ENCODE measurements at regions of chr11 and their contacts with region 1.

Region 1: DNA sequence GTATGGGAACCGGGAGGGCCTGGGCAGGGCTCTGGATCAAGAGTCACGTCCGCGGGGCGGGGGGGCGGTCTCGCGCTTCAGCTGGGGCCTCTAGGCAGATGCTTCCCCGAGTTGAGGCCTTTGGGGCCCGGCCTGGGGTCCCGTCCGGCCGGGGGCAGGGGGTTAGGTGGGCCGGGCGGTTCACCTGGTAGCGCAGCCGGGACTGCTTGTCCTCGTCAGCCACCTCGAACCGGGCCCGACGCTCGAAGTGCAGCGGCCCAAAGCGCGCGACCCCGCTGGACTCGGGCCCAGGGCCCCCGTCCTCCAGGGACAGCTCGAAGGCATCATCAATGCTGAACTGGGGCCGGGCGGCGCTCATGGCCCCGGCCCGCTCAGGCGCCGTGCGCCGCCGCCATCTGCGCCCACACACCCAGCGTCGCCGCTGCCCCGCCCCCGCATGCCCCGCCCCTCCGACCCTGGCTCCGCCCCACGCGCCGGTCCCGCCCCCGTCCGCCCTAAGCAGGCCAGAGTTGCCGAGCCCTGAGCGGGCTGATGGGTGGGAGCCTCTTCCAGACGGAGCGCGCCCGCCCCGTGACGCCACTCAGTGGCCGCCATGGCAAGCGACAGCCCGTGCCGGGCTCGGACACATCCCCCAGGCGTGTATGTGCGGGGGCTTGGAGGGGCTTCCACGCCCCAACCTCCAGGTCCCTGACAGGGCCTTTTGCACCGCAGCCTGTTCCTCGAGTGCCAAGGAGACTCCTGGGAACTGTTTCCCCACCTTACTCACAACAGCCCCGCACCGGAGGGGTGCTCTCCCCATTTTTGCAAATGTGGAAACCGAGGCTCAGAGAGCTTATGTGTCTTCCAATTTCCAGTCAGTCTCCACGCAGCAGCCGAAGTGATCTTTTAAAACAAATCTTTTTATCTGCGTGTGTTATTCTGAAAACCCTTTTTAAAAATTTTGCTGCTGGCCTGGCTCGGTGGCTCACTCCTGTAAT is at the start of gene TMEM134:
- DNase-seq: peak; percentile 86 to 96 (median 92)
- ATAC-seq: peak; percentile 71
- H3K4me3 ChIP-seq: peak within 1 kb of the TSS; percentile 83
- H3K4me3 Mint-ChIP-seq: peak within 1 kb of the TSS; percentile 91
- H3K27ac ChIP-seq: peak within 1 kb of the TSS; percentile 66 to 81
- H3K27ac Mint-ChIP-seq: peak within 1 kb of the TSS; percentile 88
- H3K4me1 ChIP-seq: peaks cover 56% of the 10 kb centered on the region
- H3K4me1 Mint-ChIP-seq: peaks cover 42% of the 10 kb centered on the region
- H3K27me3 ChIP-seq: no peaks in the 10 kb centered on the region
- H3K27me3 Mint-ChIP-seq: no peaks in the 10 kb centered on the region
- CTCF ChIP-seq: no peak
- total RNA-seq, gene TMEM134: 49.9 to 52.4 TPM

Region 2: DNA sequence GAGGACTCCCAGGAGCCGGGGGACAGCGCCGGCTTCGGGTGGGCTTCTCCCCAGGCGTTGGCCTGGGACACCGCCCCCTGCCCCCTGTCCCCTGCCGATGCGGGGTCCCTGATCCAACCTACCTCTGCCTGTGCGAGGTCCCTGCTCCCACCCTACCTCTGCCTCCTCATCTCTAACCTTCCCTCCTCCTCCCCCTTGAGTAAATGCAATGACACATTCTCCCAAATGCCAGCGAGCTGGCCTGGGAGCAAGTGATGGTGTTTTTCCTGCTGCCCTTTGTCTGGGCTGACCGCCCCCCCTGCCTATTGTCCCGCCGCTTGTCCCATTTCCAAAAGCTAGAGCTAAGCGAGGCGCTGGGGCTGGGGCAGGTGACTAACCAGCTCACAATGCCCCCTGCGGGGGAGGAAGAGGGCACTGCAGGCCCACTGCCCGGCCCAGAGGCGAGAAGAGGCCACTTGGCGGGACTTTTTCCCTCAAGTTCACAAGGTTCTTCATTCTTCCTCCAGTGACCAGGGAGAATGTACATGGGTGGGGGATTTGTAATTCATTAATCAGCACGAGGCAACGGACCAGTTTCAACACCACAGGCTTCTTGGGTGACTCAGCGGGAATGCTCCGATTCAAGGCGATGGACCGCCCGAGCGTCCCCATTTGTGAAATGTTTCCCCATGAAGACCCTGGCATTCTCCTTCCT is 95.1 kb before region 1 on chr11:
- CTCF ChIA-PET with region 1: no interaction called
- POLR2A ChIA-PET with region 1: no interaction called
- intact Hi-C with region 1: no loop called
- DNase-seq: peak in 10 of 14 experiments; percentile 26 to 83 (median 55)
- ATAC-seq: peak; percentile 46
- H3K4me3 ChIP-seq: peak overlapping the region; percentile 48
- H3K4me3 Mint-ChIP-seq: peak overlapping the region; percentile 91
- H3K27ac ChIP-seq: no peak overlapping the region
- H3K27ac Mint-ChIP-seq: peak overlapping the region; percentile 91
- H3K4me1 ChIP-seq: peaks cover 61% of the 10 kb centered on the region
- H3K4me1 Mint-ChIP-seq: peaks cover 51% of the 10 kb centered on the region
- H3K27me3 ChIP-seq: peaks cover 6 to 16% of the 10 kb centered on the region in 2 experiments
- H3K27me3 Mint-ChIP-seq: peaks cover 42% of the 10 kb centered on the region
- CTCF ChIP-seq: peak; percentile 40

Region 3: GRCh38 chr11:67401495-67402191 is 67.5 kb before region 1 on chr11 and contains the start of gene PPP1CA:
- CTCF ChIA-PET with region 1: interaction called, 28 read pairs
- POLR2A ChIA-PET with region 1: interaction called, 30 read pairs
- intact Hi-C with region 1: loop called (anchors 1 to 2 kb)
- DNase-seq: peak; percentile 83 to 96 (median 92)
- ATAC-seq: peak; percentile 69
- H3K4me3 ChIP-seq: peak within 1 kb of the TSS; percentile 98
- H3K4me3 Mint-ChIP-seq: peak within 1 kb of the TSS; percentile 100
- H3K27ac ChIP-seq: peak within 1 kb of the TSS; percentile 62 to 84
- H3K27ac Mint-ChIP-seq: peak within 1 kb of the TSS; percentile 98
- H3K4me1 ChIP-seq: peaks cover 86% of the 10 kb centered on the region
- H3K4me1 Mint-ChIP-seq: peaks cover 56% of the 10 kb centered on the region
- H3K27me3 ChIP-seq: peaks cover 0 to 3% of the 10 kb centered on the region in 2 experiments
- H3K27me3 Mint-ChIP-seq: no peaks in the 10 kb centered on the region
- CTCF ChIP-seq: no peak
- total RNA-seq, gene PPP1CA: 42.0 to 45.5 TPM

Region 4: GRCh38 chr11:67420646-67421420 is 48.3 kb before region 1 on chr11:
- CTCF ChIA-PET with region 1: interaction called, 5 read pairs
- POLR2A ChIA-PET with region 1: interaction called, 31 read pairs
- intact Hi-C with region 1: loop called in 1 of 2 experiments (anchors 5 kb)
- DNase-seq: peak; percentile 97 to 100 (median 99)
- ATAC-seq: peak; percentile 79
- H3K4me3 ChIP-seq: peak overlapping the region; percentile 50
- H3K4me3 Mint-ChIP-seq: peak overlapping the region; percentile 86
- H3K27ac ChIP-seq: peak overlapping the region; percentile 15 to 79
- H3K27ac Mint-ChIP-seq: peak overlapping the region; percentile 94
- H3K4me1 ChIP-seq: peaks cover 57% of the 10 kb centered on the region
- H3K4me1 Mint-ChIP-seq: peaks cover 56% of the 10 kb centered on the region
- H3K27me3 ChIP-seq: no peaks in the 10 kb centered on the region
- H3K27me3 Mint-ChIP-seq: no peaks in the 10 kb centered on the region
- CTCF ChIP-seq: no peak

Region 5: DNA sequence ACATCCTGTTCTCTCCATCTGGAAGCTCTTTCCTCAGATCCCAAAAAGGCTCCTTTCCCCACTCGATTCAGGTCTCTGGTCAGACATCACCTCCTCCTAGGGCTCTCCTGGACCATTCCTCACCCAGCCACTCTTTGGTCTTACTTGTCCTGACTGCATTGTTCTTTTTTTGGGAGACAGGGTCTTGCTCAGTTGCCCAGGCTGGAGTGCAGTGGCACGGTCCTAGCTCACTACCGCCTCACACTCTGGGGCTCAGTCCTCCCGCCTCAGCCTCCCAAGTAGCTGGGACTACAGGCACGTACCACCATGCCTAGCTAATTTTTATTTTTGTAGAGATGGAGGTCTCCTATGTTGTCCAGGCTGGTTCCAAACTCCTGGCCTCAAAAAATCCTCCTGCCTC is 23.6 kb before region 1 on chr11:
- CTCF ChIA-PET with region 1: interaction called, 3 read pairs
- POLR2A ChIA-PET with region 1: interaction called, 10 read pairs
- intact Hi-C with region 1: loop called (anchors 1 to 2 kb)
- DNase-seq: no peak
- ATAC-seq: no peak
- H3K4me3 ChIP-seq: no peak overlapping the region
- H3K4me3 Mint-ChIP-seq: peak overlapping the region; percentile 84
- H3K27ac ChIP-seq: peak overlapping the region; percentile 83 to 90
- H3K27ac Mint-ChIP-seq: peak overlapping the region; percentile 100
- H3K4me1 ChIP-seq: peaks cover 94% of the 10 kb centered on the region
- H3K4me1 Mint-ChIP-seq: peaks cover 81% of the 10 kb centered on the region
- H3K27me3 ChIP-seq: no peaks in the 10 kb centered on the region
- H3K27me3 Mint-ChIP-seq: no peaks in the 10 kb centered on the region
- CTCF ChIP-seq: no peak

Region 6: DNA sequence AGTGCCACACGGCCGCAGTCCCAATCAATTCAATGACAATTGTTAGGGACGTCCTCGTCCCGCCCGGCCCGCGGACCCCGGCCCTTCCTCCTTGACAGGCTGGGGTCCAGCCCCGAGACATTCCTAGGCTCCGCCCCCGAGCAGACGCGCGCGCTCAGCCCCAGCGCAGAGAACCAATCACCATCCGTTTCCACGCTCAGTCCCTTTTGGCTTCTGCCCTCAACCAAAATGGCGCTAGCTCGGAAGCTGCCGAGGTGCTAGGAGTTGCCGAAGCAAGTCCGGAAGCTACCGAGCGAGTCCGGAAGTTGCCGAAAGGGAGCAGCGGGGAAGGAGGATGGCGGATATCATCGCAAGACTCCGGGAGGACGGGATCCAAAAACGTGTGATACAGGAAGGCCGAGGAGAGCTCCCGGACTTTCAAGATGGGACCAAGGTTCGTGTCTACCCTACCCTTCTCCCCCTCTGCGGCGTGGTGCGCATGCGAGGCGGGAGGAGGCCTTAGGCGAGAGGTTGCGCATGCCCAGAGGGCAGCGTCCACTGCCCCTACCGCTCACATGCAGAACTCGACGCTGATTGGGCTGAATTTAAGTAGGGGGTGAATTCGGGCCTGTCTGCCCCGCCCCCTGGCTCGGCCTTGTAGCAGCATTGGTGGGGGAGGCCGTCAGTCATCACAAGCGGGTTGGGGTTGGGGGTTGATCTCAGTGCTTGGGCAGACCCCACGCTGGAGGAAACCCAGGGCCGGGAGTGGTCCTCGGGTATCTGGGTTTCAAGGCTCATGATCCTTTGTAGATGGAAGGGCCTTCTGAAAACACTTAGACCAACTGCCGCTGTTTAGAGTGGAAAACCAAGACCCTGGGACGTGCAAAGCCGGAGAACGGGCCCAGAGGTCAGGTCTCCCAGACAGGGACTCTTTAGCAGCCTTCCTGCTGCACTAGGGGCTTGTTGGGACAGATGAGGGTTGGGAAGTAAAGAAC is 14.0 kb after region 1 on chr11 and contains the start of gene AIP:
- CTCF ChIA-PET with region 1: interaction called, 5 read pairs
- POLR2A ChIA-PET with region 1: interaction called, 102 read pairs
- intact Hi-C with region 1: loop called (anchors 1 kb)
- DNase-seq: peak; percentile 94 to 99 (median 97)
- ATAC-seq: peak; percentile 77
- H3K4me3 ChIP-seq: peak within 1 kb of the TSS; percentile 80
- H3K4me3 Mint-ChIP-seq: peak within 1 kb of the TSS; percentile 91
- H3K27ac ChIP-seq: peak within 1 kb of the TSS; percentile 90
- H3K27ac Mint-ChIP-seq: peak within 1 kb of the TSS; percentile 95
- H3K4me1 ChIP-seq: peaks cover 63% of the 10 kb centered on the region
- H3K4me1 Mint-ChIP-seq: peaks cover 56% of the 10 kb centered on the region
- H3K27me3 ChIP-seq: no peaks in the 10 kb centered on the region
- H3K27me3 Mint-ChIP-seq: no peaks in the 10 kb centered on the region
- CTCF ChIP-seq: peak; percentile 37
- total RNA-seq, gene AIP: 115 to 117 TPM

Measured in CD4-positive, alpha-beta T cell (primary cell).